ENCODE measurements at regions of chr9 and their contacts with region 1.

Region 1: DNA sequence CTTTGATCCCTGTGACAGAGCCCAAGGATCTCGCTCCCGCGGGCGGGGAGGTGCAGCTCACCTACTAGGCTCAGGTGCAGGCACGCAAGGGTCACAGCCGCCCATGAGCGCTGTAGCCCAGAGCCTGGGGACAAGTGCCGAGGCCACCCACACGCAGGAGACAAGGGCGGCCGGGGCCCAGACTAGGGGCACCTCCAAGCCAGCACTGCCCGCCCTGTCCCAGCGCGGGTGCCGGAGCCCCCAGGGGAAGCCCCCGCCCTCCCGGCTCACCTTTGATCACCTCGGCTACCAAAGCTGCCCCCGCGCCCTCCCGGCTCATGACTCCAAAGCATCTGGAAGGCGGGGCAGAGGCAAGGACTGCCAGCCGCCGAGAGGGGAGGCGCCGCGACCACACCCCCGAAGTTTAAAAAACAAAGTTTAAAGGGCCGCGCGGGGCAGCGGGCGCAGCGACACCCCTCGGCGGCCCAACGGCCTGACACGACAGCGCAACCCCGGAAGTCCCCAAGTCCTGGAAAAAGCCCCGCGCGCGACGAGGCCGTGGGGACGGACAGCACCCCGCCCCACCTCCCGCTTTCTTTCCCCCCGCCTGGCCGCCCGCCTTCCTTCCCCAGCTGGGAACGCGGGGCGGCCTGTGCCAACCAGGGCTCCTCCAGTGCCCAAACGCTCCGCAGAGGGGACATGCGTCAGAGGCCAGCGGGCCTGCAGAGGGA is 53.0 kb downstream of the CDC14B start:
- DNase-seq: peak; percentile 77 to 90 (median 85)
- ATAC-seq: peak; percentile 76 to 93 (median 91)
- H3K4me3 ChIP-seq: peak overlapping the region; percentile 55 to 89 (median 80)
- H3K27ac ChIP-seq: peak overlapping the region; percentile 75 to 96 (median 90)
- H3K4me1 ChIP-seq: peaks cover 0 to 39% (median 20%) of the 10 kb centered on the region in 12 donors
- H3K27me3 ChIP-seq: no peaks in the 10 kb centered on the region
- CTCF ChIP-seq: peak; percentile 59 to 90 (median 71)
- POLR2A ChIP-seq: peak in 1 of 2 donors; percentile 27

Region 2: DNA sequence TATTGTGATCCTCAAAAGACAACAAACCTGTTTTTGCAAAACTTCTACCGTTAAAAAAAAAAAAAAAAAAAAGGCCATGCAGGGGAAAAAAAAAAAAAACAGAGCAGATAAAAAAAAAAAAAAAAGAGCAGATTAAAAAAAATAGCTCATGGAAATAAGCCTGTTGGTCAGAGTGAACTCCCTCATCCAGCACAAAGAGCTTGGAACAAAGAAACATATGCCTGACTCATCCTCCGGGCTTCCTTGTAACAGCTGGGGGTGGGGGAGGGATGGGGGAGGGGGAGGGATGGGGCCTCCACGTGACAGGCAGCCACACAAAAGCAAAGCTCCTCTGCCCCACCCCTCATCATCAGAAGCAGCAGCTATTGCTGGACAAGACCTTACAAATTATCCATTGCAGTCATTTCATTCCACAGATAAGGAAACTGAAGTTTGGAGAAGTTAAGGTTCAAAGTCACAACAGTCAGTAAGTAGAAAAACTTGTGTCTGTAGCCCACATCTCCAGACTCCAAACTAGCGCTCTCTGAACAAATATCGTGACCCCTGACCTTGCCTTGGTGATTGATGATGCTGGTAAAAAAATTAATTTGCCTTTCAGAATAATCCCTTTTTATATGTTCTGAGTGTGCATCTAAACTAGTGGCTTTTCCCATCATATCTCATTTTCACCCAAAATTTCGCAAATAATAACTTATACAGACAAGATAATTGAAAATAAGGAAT is 222.0 kb before region 1 on chr9:
- intact Hi-C with region 1: loop called in 1 of 10 experiments (anchors 10 kb)
- DNase-seq: peak; percentile 57 to 66 (median 63)
- ATAC-seq: peak; percentile 70 to 94 (median 91)
- H3K4me3 ChIP-seq: no peak overlapping the region
- H3K27ac ChIP-seq: peak overlapping the region in 11 of 12 donors; percentile 4 to 73 (median 46)
- H3K4me1 ChIP-seq: peaks cover 4 to 29% (median 10%) of the 10 kb centered on the region in 12 donors
- H3K27me3 ChIP-seq: no peaks in the 10 kb centered on the region
- CTCF ChIP-seq: no peak
- POLR2A ChIP-seq: no peak

Region 3: DNA sequence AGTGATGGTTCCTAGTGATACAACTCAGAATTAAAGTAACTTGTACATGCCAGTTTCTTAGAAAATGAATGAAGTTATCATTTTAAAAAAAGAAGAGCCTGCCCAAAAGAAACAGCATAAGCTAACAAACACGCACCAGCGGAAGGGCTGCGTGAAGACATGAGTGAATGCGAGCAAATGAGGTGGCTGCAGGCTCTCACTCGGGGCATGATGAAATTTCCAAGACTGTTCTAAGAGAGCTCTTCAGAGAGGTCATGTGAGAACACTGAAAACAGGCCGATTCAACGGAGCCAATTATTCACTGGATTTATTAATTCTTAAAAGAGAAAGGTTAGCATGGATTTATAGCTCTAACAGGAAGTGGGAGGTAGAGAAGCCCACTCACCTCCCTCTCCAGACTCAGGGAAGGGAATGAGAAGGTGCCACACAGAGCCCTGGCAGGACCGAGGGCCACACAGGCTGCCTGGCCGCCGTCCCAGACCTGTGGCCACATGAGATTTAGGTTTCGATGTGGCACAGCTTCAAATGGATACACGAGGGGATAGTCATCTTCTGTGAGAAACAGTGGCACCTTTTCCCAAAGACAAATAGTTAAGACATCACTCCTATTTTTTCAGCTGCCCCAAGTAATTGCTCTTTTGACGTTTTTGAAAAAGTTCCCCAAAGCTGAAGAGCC is 61.2 kb before region 1 on chr9:
- intact Hi-C with region 1: loop called in 2 of 10 experiments (anchors 5 to 10 kb)
- DNase-seq: no peak
- ATAC-seq: no peak
- H3K4me3 ChIP-seq: no peak overlapping the region
- H3K27ac ChIP-seq: no peak overlapping the region
- H3K4me1 ChIP-seq: peaks cover 0 to 54% (median 22%) of the 10 kb centered on the region in 12 donors
- H3K27me3 ChIP-seq: no peaks in the 10 kb centered on the region
- CTCF ChIP-seq: no peak
- POLR2A ChIP-seq: no peak

Region 4: GRCh38 chr9:96514108-96514799 is 52.4 kb before region 1 on chr9:
- intact Hi-C with region 1: loop called in 2 of 10 experiments (anchors 5 to 10 kb)
- DNase-seq: no peak
- ATAC-seq: peak in 2 of 4 donors; percentile 59 to 63
- H3K4me3 ChIP-seq: peak overlapping the region in 3 of 12 donors; percentile 2 to 13 (median 5)
- H3K27ac ChIP-seq: peak overlapping the region in 9 of 12 donors; percentile 17 to 67 (median 46)
- H3K4me1 ChIP-seq: peaks cover 0 to 31% (median 11%) of the 10 kb centered on the region in 12 donors
- H3K27me3 ChIP-seq: no peaks in the 10 kb centered on the region
- CTCF ChIP-seq: no peak
- POLR2A ChIP-seq: no peak

Region 5: GRCh38 chr9:96540106-96540505 is 26.5 kb before region 1 on chr9:
- intact Hi-C with region 1: no loop called
- DNase-seq: no peak
- ATAC-seq: no peak
- H3K4me3 ChIP-seq: no peak overlapping the region
- H3K27ac ChIP-seq: no peak overlapping the region
- H3K4me1 ChIP-seq: no peaks in the 10 kb centered on the region
- H3K27me3 ChIP-seq: no peaks in the 10 kb centered on the region
- CTCF ChIP-seq: no peak
- POLR2A ChIP-seq: no peak

Region 6: DNA sequence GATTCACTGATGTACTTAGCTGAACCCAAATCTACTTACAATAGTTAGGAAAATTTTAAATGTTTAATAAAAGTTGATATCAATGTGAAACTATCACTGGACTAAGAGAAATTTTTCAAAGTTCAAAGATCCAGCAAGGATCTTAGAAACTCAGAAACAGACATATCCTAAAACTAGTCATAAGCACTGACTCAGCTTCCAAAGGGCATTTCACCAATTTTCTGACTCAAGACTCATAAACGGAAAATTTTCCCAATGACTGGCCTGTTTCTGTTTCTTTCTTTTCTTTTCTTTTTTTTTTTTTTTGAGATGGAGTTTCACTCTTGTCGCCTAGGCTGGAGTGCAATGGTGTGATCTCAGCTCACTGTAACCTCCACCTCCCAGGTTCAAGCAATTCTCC is 13.6 kb before region 1 on chr9:
- intact Hi-C with region 1: loop called in 1 of 10 experiments (anchors 1 kb)
- DNase-seq: no peak
- ATAC-seq: no peak
- H3K4me3 ChIP-seq: no peak overlapping the region
- H3K27ac ChIP-seq: peak overlapping the region in 6 of 12 donors; percentile 7 to 84 (median 70)
- H3K4me1 ChIP-seq: peaks cover 0 to 54% (median 40%) of the 10 kb centered on the region in 12 donors
- H3K27me3 ChIP-seq: no peaks in the 10 kb centered on the region
- CTCF ChIP-seq: no peak
- POLR2A ChIP-seq: no peak

Region 7: GRCh38 chr9:96619491-96620154 is 53.0 kb after region 1 on chr9 and contains the start of gene CDC14B:
- intact Hi-C with region 1: loop called in 3 of 10 experiments (anchors 2 to 5 kb)
- DNase-seq: peak; percentile 87 to 96 (median 92)
- ATAC-seq: peak; percentile 50 to 82 (median 78)
- H3K4me3 ChIP-seq: peak within 1 kb of the TSS; percentile 58 to 89 (median 78)
- H3K27ac ChIP-seq: peak within 1 kb of the TSS; percentile 72 to 92 (median 88)
- H3K4me1 ChIP-seq: peaks cover 0 to 12% (median 2%) of the 10 kb centered on the region in 12 donors
- H3K27me3 ChIP-seq: peaks cover 0 to 14% (median 0%) of the 10 kb centered on the region in 9 donors
- CTCF ChIP-seq: peak in 2 of 12 donors; percentile 21 to 28
- POLR2A ChIP-seq: peak in 1 of 2 donors; percentile 16
- total RNA-seq, gene CDC14B: 18.8 to 37.0 (median 26.9) TPM

Region 8: GRCh38 chr9:96654443-96655197 is 88.0 kb after region 1 on chr9:
- intact Hi-C with region 1: loop called in 3 of 10 experiments (anchors 5 to 10 kb)
- DNase-seq: peak; percentile 89 to 94 (median 91)
- ATAC-seq: peak; percentile 93 to 95 (median 94)
- H3K4me3 ChIP-seq: peak overlapping the region; percentile 47 to 91 (median 67)
- H3K27ac ChIP-seq: peak overlapping the region; percentile 88 to 99 (median 98)
- H3K4me1 ChIP-seq: peaks cover 0 to 38% (median 13%) of the 10 kb centered on the region in 12 donors
- H3K27me3 ChIP-seq: no peaks in the 10 kb centered on the region
- CTCF ChIP-seq: peak in 4 of 12 donors; percentile 0 to 39 (median 18)
- POLR2A ChIP-seq: peak in 1 of 2 donors; percentile 47